ENCODE measurements at regions of chr14 and their contacts with region 1.

Region 1: GRCh38 chr14:54773171-54773975 is 129.3 kb downstream of the GCH1 start:
- DNase-seq: peak; percentile 35
- ATAC-seq: peak; percentile 77
- H3K4me3 ChIP-seq: no peak overlapping the region
- H3K27ac ChIP-seq: no peak overlapping the region
- H3K4me1 ChIP-seq: peaks cover 30% of the 10 kb centered on the region
- H3K27me3 ChIP-seq: no peaks in the 10 kb centered on the region; a peak in 1 of 4 replicates
- CTCF ChIP-seq: peak; percentile 33 to 43 (median 37); a peak in 5 of 6 replicates
- EP300 ChIP-seq: no peak; a peak in 1 of 4 replicates
- POLR2A ChIP-seq: no peak
- RAD21 ChIP-seq: peak; percentile 48

Region 2: DNA sequence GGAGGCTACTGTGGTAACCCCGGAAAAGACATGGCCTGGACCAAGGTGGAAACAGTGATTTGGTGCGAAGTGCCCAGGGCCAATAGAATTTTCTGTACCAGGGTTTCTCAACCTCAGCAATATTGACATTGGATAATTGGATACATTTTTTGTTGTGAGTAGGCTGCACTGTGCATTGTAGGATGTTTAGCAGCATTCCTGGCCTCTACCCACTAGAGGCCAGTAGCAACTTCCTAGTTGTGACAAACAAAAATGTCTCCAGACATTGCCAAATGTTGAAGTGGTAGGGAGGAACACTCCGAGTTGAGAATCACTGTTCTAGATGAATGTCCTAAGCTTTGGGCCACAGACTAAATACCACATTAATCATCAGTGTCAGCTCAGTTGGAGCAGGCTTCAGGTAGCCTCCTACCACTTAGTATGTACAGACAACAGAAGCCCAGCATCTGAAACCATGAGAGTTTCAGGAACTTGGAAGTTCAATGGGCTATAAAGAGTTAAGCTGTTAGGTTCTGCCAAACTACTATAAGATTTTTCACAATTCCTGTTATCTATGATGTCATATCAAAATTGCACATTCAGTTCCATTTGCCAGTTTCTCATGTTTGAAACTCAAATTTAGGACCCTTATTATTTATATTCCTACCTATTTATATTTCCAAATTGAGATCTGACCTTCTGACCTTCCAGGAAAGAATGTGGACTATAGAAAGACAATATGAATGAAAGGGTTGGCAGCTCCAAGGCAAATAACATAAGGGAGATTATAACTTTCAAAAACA is 269.7 kb before region 1 on chr14:
- CTCF ChIA-PET with region 1: no interaction called
- POLR2A ChIA-PET with region 1: no interaction called
- RAD21 ChIA-PET with region 1: no interaction called
- SMC1A ChIA-PET with region 1: no interaction called
- in situ Hi-C with region 1: no loop called
- intact Hi-C with region 1: loop called (anchors 2 kb)
- DNase-seq: no peak
- ATAC-seq: peak; percentile 68
- H3K4me3 ChIP-seq: no peak overlapping the region
- H3K27ac ChIP-seq: no peak overlapping the region
- H3K4me1 ChIP-seq: no peaks in the 10 kb centered on the region
- H3K27me3 ChIP-seq: no peaks in the 10 kb centered on the region
- CTCF ChIP-seq: peak; percentile 26 to 33 (median 27); a peak in 4 of 6 replicates
- EP300 ChIP-seq: no peak
- POLR2A ChIP-seq: no peak
- RAD21 ChIP-seq: peak; percentile 35; the same call in 1 of the 2 replicates

Region 3: DNA sequence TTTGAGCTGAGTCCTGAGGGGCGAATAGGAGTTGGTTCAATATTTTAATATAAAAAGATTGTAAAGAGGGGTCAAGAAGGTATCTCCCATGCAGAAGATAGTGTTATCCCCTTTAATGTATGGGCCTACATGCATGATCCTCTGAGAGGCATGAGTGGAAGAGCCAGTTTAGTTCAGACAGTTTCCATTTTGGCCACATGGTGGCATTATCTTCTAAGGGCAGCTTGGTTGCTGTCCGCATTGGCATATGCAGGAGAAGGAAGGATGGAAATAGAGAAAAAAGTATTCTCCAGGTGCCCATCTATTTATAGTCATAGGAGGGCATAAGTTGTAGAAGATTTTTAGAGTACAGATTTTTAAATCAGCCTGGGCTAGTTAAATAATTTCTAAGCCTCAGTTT is 201.1 kb before region 1 on chr14:
- CTCF ChIA-PET with region 1: interaction called, 160 read pairs
- POLR2A ChIA-PET with region 1: no interaction called
- RAD21 ChIA-PET with region 1: interaction called, 130 read pairs
- SMC1A ChIA-PET with region 1: interaction called, 87 read pairs
- in situ Hi-C with region 1: no loop called
- intact Hi-C with region 1: no loop called
- DNase-seq: no peak
- ATAC-seq: no peak
- H3K4me3 ChIP-seq: no peak overlapping the region
- H3K27ac ChIP-seq: no peak overlapping the region
- H3K4me1 ChIP-seq: no peaks in the 10 kb centered on the region
- H3K27me3 ChIP-seq: peaks cover 0 to 3% of the 10 kb centered on the region in 2 experiments; a peak in 1 of 4 replicates
- CTCF ChIP-seq: peak; percentile 38 to 47 (median 43); a peak in 4 of 6 replicates
- EP300 ChIP-seq: no peak
- POLR2A ChIP-seq: no peak
- RAD21 ChIP-seq: peak; percentile 61

Region 4: GRCh38 chr14:54642801-54643697 is 130.3 kb before region 1 on chr14:
- CTCF ChIA-PET with region 1: interaction called, 14 read pairs
- POLR2A ChIA-PET with region 1: no interaction called
- RAD21 ChIA-PET with region 1: interaction called, 10 read pairs
- SMC1A ChIA-PET with region 1: interaction called, 15 read pairs
- in situ Hi-C with region 1: no loop called
- intact Hi-C with region 1: loop called (anchors 5 kb)
- DNase-seq: no peak
- ATAC-seq: peak; percentile 76
- H3K4me3 ChIP-seq: no peak overlapping the region
- H3K27ac ChIP-seq: no peak overlapping the region
- H3K4me1 ChIP-seq: no peaks in the 10 kb centered on the region
- H3K27me3 ChIP-seq: 0 out of 4 replicates have a peak, but pooled peaks cover 0 to 3% of the 10 kb centered on the region in 2 experiments
- CTCF ChIP-seq: peak; percentile 29 to 58 (median 35); a peak in 5 of 6 replicates
- EP300 ChIP-seq: no peak
- POLR2A ChIP-seq: no peak
- RAD21 ChIP-seq: peak; percentile 56

Region 5: DNA sequence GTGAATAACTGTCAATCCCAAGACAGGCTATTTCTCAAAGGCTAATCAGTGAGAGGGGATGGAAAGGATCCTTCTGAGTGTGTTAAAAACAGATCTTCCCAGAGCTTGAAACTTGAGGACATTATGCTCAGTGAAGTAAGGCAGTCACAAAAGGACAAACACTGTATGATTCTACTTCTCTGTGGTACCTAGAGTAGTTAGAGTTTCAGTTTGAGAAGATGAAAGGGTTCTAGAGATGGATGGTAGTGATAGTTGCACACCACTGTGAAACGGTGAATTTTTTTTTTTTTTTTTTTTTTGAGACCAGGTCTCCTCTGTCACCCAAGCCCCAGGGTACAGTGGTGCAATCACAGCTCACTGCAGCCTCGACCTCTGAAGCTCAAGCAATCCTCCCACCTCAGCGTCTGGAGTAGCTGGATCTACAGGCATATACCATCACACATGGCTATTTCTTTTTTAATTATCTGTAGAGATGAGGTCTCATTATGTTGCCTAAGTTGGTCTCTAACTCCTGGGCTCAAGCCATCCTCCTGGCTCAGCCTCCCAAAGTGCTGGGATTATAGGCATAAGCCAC is 72.6 kb before region 1 on chr14:
- CTCF ChIA-PET with region 1: interaction called, 13 read pairs
- POLR2A ChIA-PET with region 1: no interaction called
- RAD21 ChIA-PET with region 1: interaction called, 5 read pairs
- SMC1A ChIA-PET with region 1: interaction called, 3 read pairs
- in situ Hi-C with region 1: no loop called
- intact Hi-C with region 1: no loop called
- DNase-seq: no peak
- ATAC-seq: peak; percentile 57
- H3K4me3 ChIP-seq: no peak overlapping the region
- H3K27ac ChIP-seq: no peak overlapping the region
- H3K4me1 ChIP-seq: no peaks in the 10 kb centered on the region
- H3K27me3 ChIP-seq: no peaks in the 10 kb centered on the region
- CTCF ChIP-seq: no peak
- EP300 ChIP-seq: no peak
- POLR2A ChIP-seq: no peak
- RAD21 ChIP-seq: no peak

Region 6: DNA sequence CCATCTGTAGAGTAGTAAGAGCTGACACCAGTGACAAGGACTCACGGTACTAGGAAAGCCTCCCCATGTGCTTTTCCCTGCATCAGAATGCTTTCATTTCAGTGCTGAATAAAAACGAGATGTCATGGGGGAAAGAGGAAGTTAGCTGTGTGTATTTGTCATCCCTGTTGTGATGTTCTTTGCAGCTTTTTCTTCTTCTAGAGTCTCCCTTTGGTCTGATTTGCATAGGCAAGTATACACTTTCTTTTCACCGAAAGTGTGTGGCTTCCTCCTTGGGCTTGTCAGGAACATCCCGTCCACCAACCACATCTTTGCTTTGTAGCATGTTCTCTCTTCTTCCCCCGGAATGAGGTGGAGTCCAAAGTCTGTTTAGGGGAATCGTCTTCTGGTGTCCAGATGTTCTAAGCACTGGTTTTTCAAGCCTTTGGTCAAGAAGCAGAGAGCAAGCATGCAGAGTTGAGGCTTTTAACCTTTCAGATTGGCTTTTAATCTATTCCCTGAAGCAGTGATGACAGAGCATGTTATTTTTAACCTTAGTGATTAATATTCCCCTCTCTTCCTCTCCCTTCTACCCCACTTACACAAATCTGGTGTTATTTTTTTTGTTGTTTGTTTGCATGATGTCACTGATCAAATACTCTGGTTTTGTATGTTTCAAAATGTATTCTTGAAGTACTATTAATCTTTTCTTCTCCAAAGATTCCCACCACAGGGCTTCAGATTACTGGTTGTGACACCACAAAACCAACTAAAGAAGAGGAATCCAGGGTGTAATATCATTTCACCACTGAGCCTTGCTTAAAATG is 43.0 kb before region 1 on chr14:
- CTCF ChIA-PET with region 1: interaction called, 71 read pairs
- POLR2A ChIA-PET with region 1: interaction called, 3 read pairs
- RAD21 ChIA-PET with region 1: interaction called, 6 read pairs
- SMC1A ChIA-PET with region 1: interaction called, 6 read pairs
- in situ Hi-C with region 1: no loop called
- intact Hi-C with region 1: loop called (anchors 2 kb)
- DNase-seq: peak; percentile 94
- ATAC-seq: peak; percentile 98
- H3K4me3 ChIP-seq: no peak overlapping the region
- H3K27ac ChIP-seq: peak overlapping the region; percentile 74
- H3K4me1 ChIP-seq: peaks cover 20% of the 10 kb centered on the region
- H3K27me3 ChIP-seq: no peaks in the 10 kb centered on the region
- CTCF ChIP-seq: no peak
- EP300 ChIP-seq: peak in 1 of 2 experiments; percentile 79; a peak in 1 of 4 replicates
- POLR2A ChIP-seq: no peak
- RAD21 ChIP-seq: no peak

Region 7: GRCh38 chr14:54867011-54867410 is 93.6 kb after region 1 on chr14:
- CTCF ChIA-PET with region 1: no interaction called
- POLR2A ChIA-PET with region 1: no interaction called
- RAD21 ChIA-PET with region 1: no interaction called
- SMC1A ChIA-PET with region 1: no interaction called
- in situ Hi-C with region 1: no loop called
- intact Hi-C with region 1: no loop called
- DNase-seq: no peak
- ATAC-seq: no peak
- H3K4me3 ChIP-seq: no peak overlapping the region
- H3K27ac ChIP-seq: no peak overlapping the region
- H3K4me1 ChIP-seq: no peaks in the 10 kb centered on the region
- H3K27me3 ChIP-seq: no peaks in the 10 kb centered on the region
- CTCF ChIP-seq: no peak
- EP300 ChIP-seq: no peak
- POLR2A ChIP-seq: no peak
- RAD21 ChIP-seq: no peak

Measured in GM12878 (cell line).